CD4-positive, alpha-beta T cell (primary cell): ENCODE measurements at regions of chr21 and their contacts with region 1.

Region 1: DNA sequence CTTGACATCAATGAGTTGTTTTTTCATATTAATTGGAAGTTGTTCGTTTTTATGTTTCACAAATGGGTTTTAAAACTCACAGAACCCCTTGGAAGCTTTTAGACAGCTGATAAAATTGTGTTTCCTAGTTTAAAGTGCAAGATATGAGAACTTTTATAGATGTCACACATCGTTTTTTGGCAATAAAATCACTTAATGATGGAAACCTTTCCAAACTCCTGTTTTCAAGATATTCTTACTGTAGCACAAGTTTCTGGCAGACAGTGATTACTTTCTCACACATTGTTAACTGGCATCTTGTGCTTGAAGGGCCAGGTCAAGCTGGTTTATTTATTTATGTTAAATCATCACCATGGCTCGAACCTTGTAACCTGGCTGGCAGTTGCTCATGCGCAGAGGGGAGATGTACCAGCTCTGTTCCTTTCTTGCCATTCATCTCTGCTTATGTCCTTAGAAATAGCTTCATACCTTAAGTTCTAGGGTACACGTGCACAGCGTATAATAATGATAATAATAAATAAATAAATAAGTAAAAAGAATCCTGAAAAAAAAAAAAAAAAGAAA is 10.2 kb upstream of the RCAN1 start:
- DNase-seq: no peak
- ATAC-seq: no peak
- H3K4me3 ChIP-seq: no peak overlapping the region
- H3K4me3 Mint-ChIP-seq: no peak overlapping the region
- H3K27ac ChIP-seq: no peak overlapping the region
- H3K27ac Mint-ChIP-seq: no peak overlapping the region
- H3K4me1 ChIP-seq: no peaks in the 10 kb centered on the region
- H3K4me1 Mint-ChIP-seq: no peaks in the 10 kb centered on the region
- H3K27me3 ChIP-seq: peaks cover 0 to 25% of the 10 kb centered on the region in 2 experiments
- H3K27me3 Mint-ChIP-seq: peaks cover 32% of the 10 kb centered on the region
- CTCF ChIP-seq: no peak

Region 2: GRCh38 chr21:34280389-34280795 is 344.7 kb before region 1 on chr21:
- CTCF ChIA-PET with region 1: no interaction called
- POLR2A ChIA-PET with region 1: no interaction called
- intact Hi-C with region 1: no loop called
- DNase-seq: no peak
- ATAC-seq: no peak
- H3K4me3 ChIP-seq: no peak overlapping the region
- H3K4me3 Mint-ChIP-seq: no peak overlapping the region
- H3K27ac ChIP-seq: no peak overlapping the region
- H3K27ac Mint-ChIP-seq: no peak overlapping the region
- H3K4me1 ChIP-seq: no peaks in the 10 kb centered on the region
- H3K4me1 Mint-ChIP-seq: no peaks in the 10 kb centered on the region
- H3K27me3 ChIP-seq: no peaks in the 10 kb centered on the region
- H3K27me3 Mint-ChIP-seq: peaks cover 8% of the 10 kb centered on the region
- CTCF ChIP-seq: no peak

Region 3: GRCh38 chr21:34351786-34352241 is 273.3 kb before region 1 on chr21:
- CTCF ChIA-PET with region 1: no interaction called
- POLR2A ChIA-PET with region 1: no interaction called
- intact Hi-C with region 1: loop called in 1 of 2 experiments (anchors 5 kb)
- DNase-seq: peak in 7 of 14 experiments; percentile 2 to 49 (median 9)
- ATAC-seq: peak; percentile 53
- H3K4me3 ChIP-seq: no peak overlapping the region
- H3K4me3 Mint-ChIP-seq: no peak overlapping the region
- H3K27ac ChIP-seq: no peak overlapping the region
- H3K27ac Mint-ChIP-seq: no peak overlapping the region
- H3K4me1 ChIP-seq: peaks cover 4% of the 10 kb centered on the region
- H3K4me1 Mint-ChIP-seq: peaks cover 10% of the 10 kb centered on the region
- H3K27me3 ChIP-seq: peaks cover 0 to 2% of the 10 kb centered on the region in 2 experiments
- H3K27me3 Mint-ChIP-seq: peaks cover 7% of the 10 kb centered on the region
- CTCF ChIP-seq: no peak

Region 4: GRCh38 chr21:34609244-34609932 is 15.7 kb before region 1 on chr21:
- CTCF ChIA-PET with region 1: interaction called, 3 read pairs
- POLR2A ChIA-PET with region 1: interaction called, 3 read pairs
- intact Hi-C with region 1: loop called in 1 of 2 experiments (anchors 2 kb)
- DNase-seq: no peak
- ATAC-seq: no peak
- H3K4me3 ChIP-seq: no peak overlapping the region
- H3K4me3 Mint-ChIP-seq: no peak overlapping the region
- H3K27ac ChIP-seq: no peak overlapping the region
- H3K27ac Mint-ChIP-seq: no peak overlapping the region
- H3K4me1 ChIP-seq: peaks cover 8% of the 10 kb centered on the region
- H3K4me1 Mint-ChIP-seq: peaks cover 24% of the 10 kb centered on the region
- H3K27me3 ChIP-seq: no peaks in the 10 kb centered on the region
- H3K27me3 Mint-ChIP-seq: no peaks in the 10 kb centered on the region
- CTCF ChIP-seq: no peak

Region 5: DNA sequence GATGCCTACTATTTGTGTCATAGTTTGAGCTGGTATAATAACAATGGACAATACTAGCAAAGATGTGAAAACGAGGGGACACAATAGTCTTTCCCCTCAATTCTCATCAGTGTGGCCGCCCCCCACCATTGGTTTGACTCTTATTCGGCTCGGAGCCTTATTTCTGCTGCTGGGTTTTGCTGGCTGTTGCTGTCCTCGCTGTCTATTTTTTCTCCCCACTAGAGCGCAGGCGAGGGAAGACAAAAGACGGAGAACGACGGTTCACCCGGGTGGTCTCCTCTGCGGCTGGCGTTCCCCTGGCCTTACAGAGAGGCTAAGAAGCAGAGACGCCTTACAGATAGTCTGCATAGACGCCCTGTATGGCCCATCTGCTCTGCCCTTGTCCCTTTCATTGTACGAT is 63.0 kb after region 1 on chr21:
- CTCF ChIA-PET with region 1: no interaction called
- POLR2A ChIA-PET with region 1: no interaction called
- intact Hi-C with region 1: no loop called
- DNase-seq: no peak
- ATAC-seq: no peak
- H3K4me3 ChIP-seq: no peak overlapping the region
- H3K4me3 Mint-ChIP-seq: no peak overlapping the region
- H3K27ac ChIP-seq: no peak overlapping the region
- H3K27ac Mint-ChIP-seq: no peak overlapping the region
- H3K4me1 ChIP-seq: no peaks in the 10 kb centered on the region
- H3K4me1 Mint-ChIP-seq: no peaks in the 10 kb centered on the region
- H3K27me3 ChIP-seq: peaks cover 4 to 15% of the 10 kb centered on the region in 2 experiments
- H3K27me3 Mint-ChIP-seq: peaks cover 28% of the 10 kb centered on the region
- CTCF ChIP-seq: no peak